ENCODE measurements at regions of chr2 and their contacts with region 1.

Region 1: GRCh38 chr2:226791487-226792081 is 8.0 kb downstream of the IRS1 start:
- DNase-seq: peak; percentile 95
- ATAC-seq: peak; percentile 98
- H3K4me3 ChIP-seq: peak overlapping the region; percentile 51 to 85 (median 75)
- H3K4me3 Mint-ChIP-seq: peak overlapping the region; percentile 97
- H3K27ac ChIP-seq: peak overlapping the region; percentile 92
- H3K27ac Mint-ChIP-seq: peak overlapping the region; percentile 99
- H3K4me1 ChIP-seq: peaks cover 12 to 18% of the 10 kb centered on the region in 2 donors
- H3K4me1 Mint-ChIP-seq: peaks cover 36% of the 10 kb centered on the region
- H3K27me3 ChIP-seq: no peaks in the 10 kb centered on the region
- H3K27me3 Mint-ChIP-seq: no peaks in the 10 kb centered on the region
- CTCF ChIP-seq: peak; percentile 67

Region 2: DNA sequence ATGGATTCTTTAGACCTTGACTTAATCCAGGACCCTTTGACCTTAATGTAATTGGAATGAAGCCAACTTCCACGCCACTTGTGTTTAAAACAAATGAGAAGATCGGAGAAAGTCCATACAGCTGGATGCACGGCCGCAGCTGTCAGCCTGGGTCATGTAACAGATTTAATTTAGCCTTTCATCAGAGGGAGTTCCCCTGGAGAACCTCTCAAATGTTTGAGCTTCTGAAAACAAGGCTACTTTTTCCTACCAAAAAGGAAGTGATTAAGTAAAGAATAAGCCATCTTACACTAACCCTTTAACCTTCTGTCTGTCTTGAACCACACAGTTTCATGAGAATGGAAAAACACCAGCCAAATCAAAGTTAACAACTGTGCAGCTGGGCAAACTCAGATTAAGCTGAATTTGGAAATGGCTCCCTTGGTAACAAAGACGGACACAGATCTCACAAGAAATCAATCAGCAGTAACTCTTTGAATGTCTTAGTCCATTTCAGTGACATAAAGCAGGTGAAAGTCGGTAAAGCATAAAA is 1852.9 kb before region 1 on chr2:
- CTCF ChIA-PET with region 1: no interaction called
- POLR2A ChIA-PET with region 1: no interaction called
- intact Hi-C with region 1: loop called (anchors 10 kb)
- DNase-seq: peak; percentile 45
- ATAC-seq: peak; percentile 50
- H3K4me3 ChIP-seq: peak overlapping the region in 1 of 5 experiments; percentile 26
- H3K4me3 Mint-ChIP-seq: peak overlapping the region; percentile 70
- H3K27ac ChIP-seq: peak overlapping the region; percentile 60 to 80
- H3K27ac Mint-ChIP-seq: peak overlapping the region; percentile 91
- H3K4me1 ChIP-seq: peaks cover 52 to 61% of the 10 kb centered on the region in 2 donors
- H3K4me1 Mint-ChIP-seq: peaks cover 80% of the 10 kb centered on the region
- H3K27me3 ChIP-seq: no peaks in the 10 kb centered on the region
- H3K27me3 Mint-ChIP-seq: no peaks in the 10 kb centered on the region
- CTCF ChIP-seq: no peak

Region 3: GRCh38 chr2:226325526-226325925 is 466.1 kb before region 1 on chr2:
- CTCF ChIA-PET with region 1: no interaction called
- POLR2A ChIA-PET with region 1: no interaction called
- intact Hi-C with region 1: loop called (anchors 10 kb)
- DNase-seq: no peak
- ATAC-seq: no peak
- H3K4me3 ChIP-seq: no peak overlapping the region
- H3K4me3 Mint-ChIP-seq: no peak overlapping the region
- H3K27ac ChIP-seq: no peak overlapping the region
- H3K27ac Mint-ChIP-seq: no peak overlapping the region
- H3K4me1 ChIP-seq: no peaks in the 10 kb centered on the region
- H3K4me1 Mint-ChIP-seq: no peaks in the 10 kb centered on the region
- H3K27me3 ChIP-seq: no peaks in the 10 kb centered on the region
- H3K27me3 Mint-ChIP-seq: peaks cover 10% of the 10 kb centered on the region
- CTCF ChIP-seq: no peak

Region 4: GRCh38 chr2:226835796-226836547 is 44.4 kb after region 1 on chr2 and contains the start of gene RHBDD1:
- CTCF ChIA-PET with region 1: no interaction called
- POLR2A ChIA-PET with region 1: no interaction called
- intact Hi-C with region 1: loop called (anchors 1 kb)
- DNase-seq: peak; percentile 98
- ATAC-seq: peak; percentile 84
- H3K4me3 ChIP-seq: peak within 1 kb of the TSS; percentile 63 to 89 (median 81)
- H3K4me3 Mint-ChIP-seq: peak within 1 kb of the TSS; percentile 98
- H3K27ac ChIP-seq: peak within 1 kb of the TSS; percentile 95 to 99
- H3K27ac Mint-ChIP-seq: peak within 1 kb of the TSS; percentile 100
- H3K4me1 ChIP-seq: peaks cover 46 to 50% of the 10 kb centered on the region in 2 donors
- H3K4me1 Mint-ChIP-seq: peaks cover 52% of the 10 kb centered on the region
- H3K27me3 ChIP-seq: no peaks in the 10 kb centered on the region
- H3K27me3 Mint-ChIP-seq: no peaks in the 10 kb centered on the region
- CTCF ChIP-seq: no peak
- total RNA-seq, gene RHBDD1: 128 and 142 TPM in 2 replicates

Region 5: DNA sequence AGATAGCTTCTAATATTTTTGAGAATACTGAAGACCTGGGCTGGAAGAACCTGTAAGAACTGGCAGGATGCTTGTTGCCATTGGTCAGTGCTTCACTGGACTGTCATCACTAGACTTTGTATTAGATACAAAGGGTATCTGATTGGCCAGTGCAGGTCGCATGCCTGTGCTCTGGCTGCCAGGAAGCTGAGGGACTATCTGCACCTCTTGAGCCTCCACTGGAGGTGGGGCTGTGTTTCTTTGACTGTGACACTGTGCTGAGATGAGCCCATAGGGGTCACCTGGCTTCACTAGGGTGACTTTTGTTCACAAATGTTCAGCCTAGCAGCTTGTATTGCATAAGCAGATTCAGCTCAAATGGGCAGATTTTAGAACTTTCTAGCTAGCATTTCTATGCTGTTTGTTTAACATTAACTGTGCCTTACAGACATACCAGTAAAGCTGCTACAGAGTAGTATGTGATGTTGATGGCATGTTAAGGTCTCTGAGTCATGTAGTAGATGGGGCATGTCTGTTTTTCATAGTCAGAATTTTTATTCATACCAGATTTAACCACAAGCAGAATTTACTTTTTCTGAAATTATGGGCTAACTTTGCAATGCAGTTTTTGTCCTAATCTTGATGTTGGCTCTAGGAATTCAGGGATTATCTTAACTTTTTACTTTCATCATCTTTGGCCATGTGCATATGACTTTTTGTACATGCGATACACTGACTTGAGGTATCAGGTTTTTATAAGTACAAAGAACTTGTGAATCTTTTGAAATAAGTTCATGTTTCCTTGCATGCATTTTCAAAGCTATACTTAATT is 100.4 kb after region 1 on chr2:
- CTCF ChIA-PET with region 1: no interaction called
- POLR2A ChIA-PET with region 1: no interaction called
- intact Hi-C with region 1: no loop called
- DNase-seq: no peak
- ATAC-seq: peak; percentile 45
- H3K4me3 ChIP-seq: no peak overlapping the region
- H3K4me3 Mint-ChIP-seq: no peak overlapping the region
- H3K27ac ChIP-seq: no peak overlapping the region
- H3K27ac Mint-ChIP-seq: peak overlapping the region; percentile 37
- H3K4me1 ChIP-seq: peaks cover 0 to 5% of the 10 kb centered on the region in 2 donors
- H3K4me1 Mint-ChIP-seq: peaks cover 27% of the 10 kb centered on the region
- H3K27me3 ChIP-seq: no peaks in the 10 kb centered on the region
- H3K27me3 Mint-ChIP-seq: no peaks in the 10 kb centered on the region
- CTCF ChIP-seq: no peak

Region 6: GRCh38 chr2:227324995-227325838 is 533.6 kb after region 1 on chr2 and contains the start of gene MFF:
- CTCF ChIA-PET with region 1: no interaction called
- POLR2A ChIA-PET with region 1: no interaction called
- intact Hi-C with region 1: loop called (anchors 5 kb)
- DNase-seq: peak; percentile 95
- ATAC-seq: peak; percentile 98
- H3K4me3 ChIP-seq: peak within 1 kb of the TSS; percentile 78 to 88 (median 80)
- H3K4me3 Mint-ChIP-seq: peak within 1 kb of the TSS; percentile 96
- H3K27ac ChIP-seq: peak within 1 kb of the TSS; percentile 72 to 89
- H3K27ac Mint-ChIP-seq: peak within 1 kb of the TSS; percentile 95
- H3K4me1 ChIP-seq: peaks cover 20 to 23% of the 10 kb centered on the region in 2 donors
- H3K4me1 Mint-ChIP-seq: peaks cover 33% of the 10 kb centered on the region
- H3K27me3 ChIP-seq: no peaks in the 10 kb centered on the region
- H3K27me3 Mint-ChIP-seq: no peaks in the 10 kb centered on the region
- CTCF ChIP-seq: peak; percentile 43
- total RNA-seq, gene MFF: 70.4 and 75.2 TPM in 2 replicates

Measured in B cell (primary cell).